Transverse colon (tissue), 4 donors: ENCODE measurements at regions of chr1 and their contacts with region 1.

Region 1: GRCh38 chr1:202728951-202729350 is 18.7 kb upstream of the SYT2 start:
- DNase-seq: no peak
- H3K4me3 ChIP-seq: no peak overlapping the region
- H3K27ac ChIP-seq: no peak overlapping the region
- H3K4me1 ChIP-seq: no peaks in the 10 kb centered on the region
- H3K27me3 ChIP-seq: no peaks in the 10 kb centered on the region
- CTCF ChIP-seq: no peak
- EP300 ChIP-seq: no peak
- POLR2A ChIP-seq: no peak

Region 2: DNA sequence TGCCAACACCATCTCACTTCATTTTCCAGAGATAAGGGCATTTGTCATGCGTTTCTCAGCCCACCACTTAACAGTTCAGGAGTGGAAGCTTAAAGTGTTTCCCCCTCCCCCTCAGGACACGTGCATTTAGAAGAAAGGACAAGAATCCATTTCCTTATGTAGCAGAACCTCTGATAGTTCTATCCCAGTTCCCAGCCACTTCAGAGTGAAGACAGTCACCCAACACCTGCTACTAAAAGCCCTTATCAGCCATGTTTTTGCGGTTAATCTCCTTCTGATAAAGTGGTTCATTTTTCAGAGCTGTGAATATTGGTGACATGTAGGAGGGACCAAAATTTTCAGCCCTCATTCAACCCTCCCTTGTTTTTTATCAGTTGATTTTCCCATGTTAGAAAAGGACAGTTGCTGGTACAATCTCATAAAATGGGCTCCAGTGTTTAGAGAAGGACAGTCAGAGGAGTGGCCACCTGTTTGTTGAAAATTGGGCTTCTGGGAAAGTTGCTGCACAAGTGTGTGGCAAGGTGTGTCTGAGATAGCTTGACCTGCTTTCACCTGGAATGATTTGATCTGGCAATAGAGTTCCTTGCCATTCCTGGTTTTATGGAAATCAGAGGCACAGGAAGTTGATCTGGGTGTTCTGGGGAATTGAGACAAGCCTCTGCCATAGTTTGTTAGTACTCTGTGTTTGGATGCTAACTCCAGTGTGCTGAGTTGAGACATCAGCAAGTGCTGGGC is 266.4 kb before region 1 on chr1:
- in situ Hi-C with region 1: no loop called
- intact Hi-C with region 1: loop called (anchors 10 kb)
- DNase-seq: peak; percentile 16
- H3K4me3 ChIP-seq: no peak overlapping the region
- H3K27ac ChIP-seq: peak overlapping the region; percentile 54 to 76 (median 70)
- H3K4me1 ChIP-seq: peaks cover 6 to 62% (median 12%) of the 10 kb centered on the region in 4 donors
- H3K27me3 ChIP-seq: no peaks in the 10 kb centered on the region
- CTCF ChIP-seq: no peak
- EP300 ChIP-seq: no peak
- POLR2A ChIP-seq: no peak

Region 3: GRCh38 chr1:202745323-202745888 is 16.5 kb after region 1 on chr1:
- in situ Hi-C with region 1: no loop called
- intact Hi-C with region 1: loop called (anchors 1 kb)
- DNase-seq: no peak
- H3K4me3 ChIP-seq: no peak overlapping the region
- H3K27ac ChIP-seq: no peak overlapping the region
- H3K4me1 ChIP-seq: no peaks in the 10 kb centered on the region
- H3K27me3 ChIP-seq: no peaks in the 10 kb centered on the region
- CTCF ChIP-seq: no peak
- EP300 ChIP-seq: no peak
- POLR2A ChIP-seq: no peak